ENCODE measurements at regions of chr2 and their contacts with region 1.

Region 1: GRCh38 chr2:102703748-102704147 is 58.1 kb upstream of the TMEM182 start:
- DNase-seq: peak; percentile 27
- H3K4me3 ChIP-seq: no peak overlapping the region
- H3K27ac ChIP-seq: no peak overlapping the region
- H3K4me1 ChIP-seq: no peaks in the 10 kb centered on the region
- H3K27me3 ChIP-seq: peaks cover 9% of the 10 kb centered on the region
- CTCF ChIP-seq: peak; percentile 42

Region 2: GRCh38 chr2:102473020-102473419 is 230.7 kb before region 1 on chr2 and contains the start of gene SLC9A4:
- CTCF ChIA-PET with region 1: interaction called, 5 read pairs
- POLR2A ChIA-PET with region 1: no interaction called
- intact Hi-C with region 1: loop called (anchors 2 kb)
- DNase-seq: peak; percentile 41
- H3K4me3 ChIP-seq: no peak within 1 kb of the TSS
- H3K27ac ChIP-seq: no peak within 1 kb of the TSS
- H3K4me1 ChIP-seq: no peaks in the 10 kb centered on the region
- H3K27me3 ChIP-seq: peaks cover 22% of the 10 kb centered on the region
- CTCF ChIP-seq: peak; percentile 83
- total RNA-seq, gene SLC9A4: 0.11 and 0.17 TPM in 2 replicates

Region 3: GRCh38 chr2:102737431-102737830 is 33.7 kb after region 1 on chr2:
- CTCF ChIA-PET with region 1: no interaction called
- POLR2A ChIA-PET with region 1: no interaction called
- intact Hi-C with region 1: no loop called
- DNase-seq: no peak
- H3K4me3 ChIP-seq: peak overlapping the region; percentile 95
- H3K27ac ChIP-seq: no peak overlapping the region
- H3K4me1 ChIP-seq: no peaks in the 10 kb centered on the region
- H3K27me3 ChIP-seq: no peaks in the 10 kb centered on the region
- CTCF ChIP-seq: no peak